H1 (cell line): ENCODE measurements at regions of chr20 and their contacts with region 1.

Region 1: DNA sequence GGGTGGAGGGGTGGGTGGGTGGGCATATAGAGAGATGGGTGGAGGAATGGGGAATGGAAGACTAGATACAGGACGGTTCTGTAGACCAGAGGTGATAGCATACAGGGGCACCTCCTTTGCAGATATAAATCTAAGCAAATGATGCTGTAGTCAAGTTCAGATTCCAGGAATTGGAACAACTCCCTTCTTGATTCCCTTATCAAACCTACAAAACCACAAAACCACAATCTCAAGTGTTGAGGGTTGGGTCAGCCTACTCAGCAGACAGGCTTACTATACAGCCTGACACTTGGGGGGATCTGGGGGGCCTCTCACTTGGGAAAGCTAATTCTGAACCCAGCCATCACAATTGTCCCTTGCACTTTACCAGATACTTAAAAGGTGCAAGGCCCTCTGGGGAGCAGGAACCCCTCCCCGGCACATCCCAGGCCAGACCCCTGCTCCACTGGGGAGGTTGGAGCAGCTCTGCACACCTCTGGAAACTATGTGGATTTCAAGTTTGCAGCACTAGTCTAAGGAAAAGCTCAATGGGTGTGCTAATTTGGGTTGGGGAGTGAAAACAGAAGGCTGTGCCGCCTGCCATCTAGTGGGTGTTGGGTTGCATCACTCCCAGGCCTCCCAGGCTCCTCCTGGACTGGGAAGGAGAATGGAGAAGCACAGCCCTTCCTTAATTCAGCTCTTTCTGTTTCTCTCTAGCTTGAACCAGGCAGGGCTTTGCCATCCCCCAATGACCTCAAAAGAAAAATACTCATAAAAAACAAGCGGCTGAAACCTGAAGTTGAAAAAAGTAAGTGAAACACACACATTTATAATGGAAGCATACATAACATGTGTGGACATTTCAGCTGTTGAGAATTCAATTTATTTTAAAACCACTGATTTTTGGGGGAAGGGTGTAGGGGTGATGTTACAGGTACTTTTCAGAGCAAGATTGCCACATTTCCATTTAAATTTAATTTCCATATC is 121.2 kb upstream of the LAMP5 start:
- DNase-seq: peak; percentile 58 to 65
- H3K4me3 ChIP-seq: no peak overlapping the region
- H3K27ac ChIP-seq: no peak overlapping the region
- H3K4me1 ChIP-seq: no peaks in the 10 kb centered on the region; a peak in 1 of 7 replicates
- H3K27me3 ChIP-seq: no peaks in the 10 kb centered on the region
- CTCF ChIP-seq: peak; percentile 81 to 90 (median 89)
- EP300 ChIP-seq: no peak
- POLR2A ChIP-seq: no peak
- RAD21 ChIP-seq: peak; percentile 94 to 95

Region 2: DNA sequence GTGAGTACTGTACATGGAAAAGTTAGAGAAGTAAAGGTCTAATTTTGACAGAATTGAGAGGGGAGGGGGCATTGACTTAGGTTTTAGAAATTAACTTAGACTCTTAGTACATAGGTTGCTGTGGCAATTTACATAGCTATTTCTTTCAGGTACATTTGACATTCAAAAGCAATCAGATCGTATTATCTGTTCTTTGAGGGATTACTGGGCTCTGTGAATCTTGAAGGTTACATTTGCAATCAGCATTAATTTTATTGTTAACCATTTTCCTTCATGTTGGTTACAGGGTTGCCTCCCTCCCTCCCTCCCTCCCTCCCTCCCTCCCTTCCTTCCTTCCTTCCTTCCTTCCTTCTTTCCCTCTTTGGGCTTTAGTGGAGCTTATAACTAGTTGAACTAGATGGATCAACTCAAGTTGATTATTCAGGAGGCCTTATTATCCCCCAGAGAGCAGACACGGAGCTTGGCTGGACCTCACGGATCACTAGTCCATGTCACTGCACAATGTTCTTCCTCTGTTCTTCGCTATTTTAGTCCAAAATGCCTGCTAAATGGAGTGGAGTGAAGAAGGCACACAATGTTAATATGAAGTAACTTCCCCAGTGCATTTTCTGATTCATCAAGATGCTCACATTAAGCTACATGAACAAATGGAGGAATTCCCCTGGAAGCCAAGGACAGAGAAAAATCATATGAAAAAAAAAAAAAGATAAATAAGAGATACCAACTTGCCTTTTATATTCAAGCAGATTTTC is 236.5 kb before region 1 on chr20:
- CTCF ChIA-PET with region 1: interaction called, 10 read pairs
- POLR2A ChIA-PET with region 1: no interaction called
- DNase-seq: no peak
- H3K4me3 ChIP-seq: no peak overlapping the region
- H3K27ac ChIP-seq: no peak overlapping the region
- H3K4me1 ChIP-seq: peaks cover 0 to 8% (median 7%) of the 10 kb centered on the region in 4 experiments; a peak in 4 of 7 replicates
- H3K27me3 ChIP-seq: no peaks in the 10 kb centered on the region
- CTCF ChIP-seq: no peak
- EP300 ChIP-seq: no peak
- POLR2A ChIP-seq: no peak
- RAD21 ChIP-seq: no peak

Region 3: DNA sequence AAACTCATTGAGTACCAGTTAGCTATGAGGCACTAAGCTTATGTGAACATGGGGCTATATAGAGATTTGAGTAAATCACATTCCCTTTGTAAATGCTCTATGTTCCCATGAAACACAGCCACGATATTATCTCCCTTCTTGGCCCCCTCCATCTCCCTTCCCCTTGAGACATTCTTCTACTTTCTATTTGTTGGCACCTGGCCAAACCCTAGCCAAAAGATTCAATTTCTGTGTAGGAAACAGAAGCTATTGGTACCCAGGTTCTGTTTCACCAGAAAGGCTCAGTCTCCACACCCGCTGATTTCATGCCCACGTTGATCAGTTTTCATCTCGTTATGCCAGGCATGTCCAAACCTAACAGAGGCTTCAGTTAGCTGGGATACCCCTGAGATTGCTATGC is 24.3 kb before region 1 on chr20:
- CTCF ChIA-PET with region 1: interaction called, 13 read pairs
- POLR2A ChIA-PET with region 1: no interaction called
- DNase-seq: no peak
- H3K4me3 ChIP-seq: no peak overlapping the region
- H3K27ac ChIP-seq: no peak overlapping the region
- H3K4me1 ChIP-seq: no peaks in the 10 kb centered on the region
- H3K27me3 ChIP-seq: no peaks in the 10 kb centered on the region
- CTCF ChIP-seq: no peak
- EP300 ChIP-seq: no peak
- POLR2A ChIP-seq: no peak
- RAD21 ChIP-seq: no peak

Region 4: DNA sequence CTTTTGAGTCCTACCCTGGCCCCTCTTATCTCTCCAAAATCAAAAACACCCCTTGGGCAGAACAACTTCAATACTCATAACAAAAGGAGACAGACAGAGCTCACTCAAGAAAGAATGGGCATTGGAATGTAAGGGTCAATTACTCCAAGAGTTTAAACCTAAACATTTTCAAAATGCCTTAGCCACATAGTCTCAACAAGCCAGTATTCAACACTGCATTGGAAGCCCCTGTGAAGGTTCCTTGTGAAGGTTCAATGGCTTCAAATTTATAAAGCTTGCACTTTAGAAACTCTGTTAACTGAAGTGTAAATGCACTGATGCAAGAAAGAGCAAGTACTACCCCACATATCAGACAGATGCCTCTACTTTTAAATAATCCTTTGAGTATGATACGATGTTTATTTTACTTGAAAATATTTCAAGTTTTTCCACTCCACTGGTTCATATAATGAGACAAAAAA is 17.9 kb before region 1 on chr20:
- CTCF ChIA-PET with region 1: interaction called, 13 read pairs
- POLR2A ChIA-PET with region 1: no interaction called
- DNase-seq: no peak
- H3K4me3 ChIP-seq: peak overlapping the region in 1 of 4 experiments; percentile 16; a peak in 1 of 8 replicates
- H3K27ac ChIP-seq: no peak overlapping the region
- H3K4me1 ChIP-seq: peaks cover 0 to 11% (median 1%) of the 10 kb centered on the region in 4 experiments; a peak in 1 of 7 replicates
- H3K27me3 ChIP-seq: no peaks in the 10 kb centered on the region
- CTCF ChIP-seq: no peak
- EP300 ChIP-seq: no peak
- POLR2A ChIP-seq: no peak
- RAD21 ChIP-seq: no peak